Transverse colon (tissue), 4 donors: ENCODE measurements at regions of chr19 and their contacts with region 1.

Region 1: GRCh38 chr19:29714953-29715700 is at the start of gene C19orf12:
- DNase-seq: peak; percentile 64
- H3K4me3 ChIP-seq: peak within 1 kb of the TSS; percentile 85 to 98 (median 94)
- H3K27ac ChIP-seq: peak within 1 kb of the TSS; percentile 89 to 99 (median 94)
- H3K4me1 ChIP-seq: peaks cover 16 to 38% (median 22%) of the 10 kb centered on the region in 4 donors
- H3K27me3 ChIP-seq: no peaks in the 10 kb centered on the region
- CTCF ChIP-seq: no peak
- EP300 ChIP-seq: no peak
- POLR2A ChIP-seq: peak; percentile 78
- total RNA-seq, gene C19orf12: 13.9 to 33.3 (median 21.4) TPM

Region 2: DNA sequence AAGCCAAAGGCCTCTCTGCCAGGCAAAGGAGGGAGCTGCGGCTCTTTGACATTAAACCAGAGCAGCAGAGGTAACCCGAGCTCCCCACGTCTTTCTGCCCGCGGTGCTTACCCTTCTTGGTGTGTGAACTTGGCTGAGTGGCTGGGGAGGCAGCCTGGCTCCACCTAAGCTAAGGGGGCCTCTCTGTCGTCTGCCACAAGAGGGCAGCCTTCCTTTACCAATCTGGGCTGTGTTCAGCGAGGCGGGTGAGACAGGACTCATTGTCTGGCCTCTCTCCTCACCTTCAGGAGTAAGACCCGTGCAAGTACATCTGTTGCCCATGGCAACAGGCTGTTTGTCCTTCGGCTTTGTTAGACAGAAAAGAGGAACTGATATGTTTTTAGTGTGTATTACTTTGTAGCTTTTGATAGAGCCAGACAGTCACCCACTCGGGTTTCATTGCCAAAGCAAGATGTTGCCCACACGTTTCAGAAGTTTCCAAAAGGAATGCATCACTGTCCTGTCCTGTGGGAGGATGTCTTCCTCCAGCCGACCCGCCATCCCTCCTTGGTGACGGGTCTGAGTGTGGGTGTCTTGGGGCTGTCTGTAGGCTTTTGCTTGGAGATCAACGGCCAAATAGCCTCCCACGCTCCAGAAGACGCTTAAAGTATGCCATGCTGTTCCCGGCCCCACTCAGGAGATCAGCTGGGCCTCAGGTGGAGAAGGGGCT is 104.4 kb before region 1 on chr19:
- in situ Hi-C with region 1: loop called (anchors 5 to 25 kb)
- intact Hi-C with region 1: loop called (anchors 2 kb)
- DNase-seq: peak; percentile 80
- H3K4me3 ChIP-seq: no peak overlapping the region
- H3K27ac ChIP-seq: no peak overlapping the region
- H3K4me1 ChIP-seq: peaks cover 4 to 10% (median 7%) of the 10 kb centered on the region in 4 donors
- H3K27me3 ChIP-seq: no peaks in the 10 kb centered on the region
- CTCF ChIP-seq: peak; percentile 70 to 88 (median 78)
- EP300 ChIP-seq: no peak
- POLR2A ChIP-seq: no peak

Region 3: DNA sequence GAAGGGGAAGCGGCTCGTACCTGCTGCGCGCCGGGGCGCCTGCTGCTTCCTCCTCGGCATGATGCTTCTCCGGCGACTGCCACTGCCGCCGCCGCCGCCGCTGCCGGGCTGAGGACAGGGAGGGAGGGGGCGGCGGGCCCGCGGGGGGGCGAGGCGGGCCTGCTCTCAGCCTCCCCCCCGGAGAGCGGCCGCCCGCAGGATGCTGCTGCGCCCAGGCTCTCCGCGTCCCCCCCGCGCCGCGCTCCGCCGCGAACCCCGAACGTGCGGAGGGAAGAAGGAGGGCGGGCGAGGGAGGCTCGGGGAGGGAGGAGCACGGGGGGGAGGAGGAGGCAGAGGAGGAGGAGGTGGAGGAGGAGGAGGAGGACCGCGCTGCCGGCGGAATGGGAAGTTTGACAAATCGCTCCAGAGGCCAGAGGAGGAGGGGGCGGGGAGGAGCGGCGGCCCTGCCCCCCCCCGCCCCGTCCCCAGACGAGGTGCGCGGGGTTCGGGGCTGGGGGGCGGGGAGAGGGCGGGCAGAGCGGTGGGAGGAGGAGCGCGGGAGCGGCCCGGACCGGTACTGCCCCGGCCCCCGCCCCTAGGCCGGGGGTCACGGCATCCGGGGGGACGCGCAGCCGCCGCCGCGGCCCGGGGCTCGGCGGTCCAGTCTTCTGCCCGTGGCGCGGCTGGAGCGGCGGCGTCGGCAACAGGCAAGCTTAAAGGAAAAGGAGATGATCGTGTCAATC is 1634.2 kb after region 1 on chr19 and contains the start of gene TSHZ3:
- in situ Hi-C with region 1: no loop called
- intact Hi-C with region 1: loop called (anchors 5 kb)
- DNase-seq: peak; percentile 72
- H3K4me3 ChIP-seq: peak within 1 kb of the TSS; percentile 71 to 97 (median 90)
- H3K27ac ChIP-seq: peak within 1 kb of the TSS; percentile 93 to 97 (median 96)
- H3K4me1 ChIP-seq: peaks cover 0 to 47% (median 18%) of the 10 kb centered on the region in 4 donors
- H3K27me3 ChIP-seq: peaks cover 87% of the 10 kb centered on the region
- CTCF ChIP-seq: no peak
- EP300 ChIP-seq: no peak
- POLR2A ChIP-seq: no peak
- total RNA-seq, gene TSHZ3: 3.0 to 6.4 (median 4.6) TPM